Gastrocnemius medialis (tissue), 4 donors: ENCODE measurements at regions of chr13 and their contacts with region 1.

Region 1: GRCh38 chr13:37109051-37109678 is 3.7 kb upstream of the CSNK1A1L start:
- DNase-seq: no peak
- ATAC-seq: no peak
- H3K4me3 ChIP-seq: no peak overlapping the region
- H3K27ac ChIP-seq: no peak overlapping the region
- H3K4me1 ChIP-seq: no peaks in the 10 kb centered on the region
- H3K27me3 ChIP-seq: no peaks in the 10 kb centered on the region
- CTCF ChIP-seq: peak in 2 of 5 experiments; percentile 40 to 47
- POLR2A ChIP-seq: no peak

Region 2: DNA sequence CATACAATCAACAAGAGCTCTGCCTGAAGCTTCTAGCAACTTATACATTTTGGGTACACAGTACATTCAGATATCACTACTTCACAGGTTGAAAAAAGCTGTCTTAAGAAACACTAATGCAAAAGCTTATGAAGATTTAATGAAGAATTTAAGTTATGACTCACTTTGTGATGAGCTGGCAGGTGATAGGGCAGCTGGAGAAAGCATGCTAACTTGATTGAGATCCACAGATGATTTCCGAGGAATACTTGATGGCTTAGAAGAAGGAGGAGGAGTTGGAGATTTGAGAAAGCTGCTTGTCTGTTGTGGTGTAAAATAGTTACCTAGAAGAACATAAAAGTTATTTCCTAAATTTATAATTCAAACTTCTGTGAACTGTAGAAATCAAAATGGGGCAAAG is 85.3 kb before region 1 on chr13:
- in situ Hi-C with region 1: no loop called
- intact Hi-C with region 1: no loop called
- DNase-seq: no peak
- ATAC-seq: no peak
- H3K4me3 ChIP-seq: no peak overlapping the region
- H3K27ac ChIP-seq: no peak overlapping the region
- H3K4me1 ChIP-seq: no peaks in the 10 kb centered on the region
- H3K27me3 ChIP-seq: no peaks in the 10 kb centered on the region
- CTCF ChIP-seq: no peak
- POLR2A ChIP-seq: no peak

Region 3: GRCh38 chr13:37595162-37595561 is 486.0 kb after region 1 on chr13:
- in situ Hi-C with region 1: loop called (anchors 10 to 25 kb)
- intact Hi-C with region 1: loop called (anchors 5 kb)
- DNase-seq: no peak
- ATAC-seq: no peak
- H3K4me3 ChIP-seq: no peak overlapping the region
- H3K27ac ChIP-seq: no peak overlapping the region
- H3K4me1 ChIP-seq: no peaks in the 10 kb centered on the region
- H3K27me3 ChIP-seq: no peaks in the 10 kb centered on the region
- CTCF ChIP-seq: no peak
- POLR2A ChIP-seq: no peak

Region 4: GRCh38 chr13:37602747-37603381 is 493.7 kb after region 1 on chr13:
- in situ Hi-C with region 1: loop called (anchors 10 to 25 kb)
- intact Hi-C with region 1: loop called (anchors 5 kb)
- DNase-seq: no peak
- ATAC-seq: no peak
- H3K4me3 ChIP-seq: no peak overlapping the region
- H3K27ac ChIP-seq: no peak overlapping the region
- H3K4me1 ChIP-seq: no peaks in the 10 kb centered on the region
- H3K27me3 ChIP-seq: no peaks in the 10 kb centered on the region
- CTCF ChIP-seq: peak in 3 of 5 experiments; percentile 16 to 46 (median 42)
- POLR2A ChIP-seq: no peak